ENCODE measurements at regions of chr17 and their contacts with region 1.

Region 1: GRCh38 chr17:72191921-72192799 is 71.3 kb downstream of the SOX9 start:
- DNase-seq: peak; percentile 73
- ATAC-seq: peak; percentile 81

Region 2: DNA sequence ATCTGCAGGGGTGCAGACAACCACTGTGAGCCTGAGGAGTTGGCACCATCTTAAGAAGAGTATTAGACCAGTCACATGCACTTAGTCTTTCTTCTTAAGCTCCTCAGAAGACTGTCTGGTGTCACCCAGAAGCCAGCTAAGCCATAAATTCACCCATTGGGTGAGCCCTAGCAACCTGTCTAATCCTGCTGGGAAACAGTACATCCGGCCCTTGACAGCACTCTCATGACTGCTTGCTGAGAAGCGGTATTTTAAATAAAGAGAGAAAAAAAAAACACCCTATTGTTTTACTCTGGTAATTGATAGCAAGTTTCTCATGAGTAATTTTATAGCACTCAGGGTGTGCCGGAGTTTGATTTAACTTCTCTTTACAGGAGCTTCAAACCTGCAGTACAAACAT is 63.3 kb after region 1 on chr17:
- intact Hi-C with region 1: loop called (anchors 10 kb)
- DNase-seq: no peak
- ATAC-seq: no peak

Measured in Right ventricle myocardium superior (tissue), 1 donor.